HCT116 (cell line): ENCODE measurements at regions of chr12 and their contacts with region 1.

Region 1: GRCh38 chr12:40010899-40011774 is 94.7 kb downstream of the SLC2A13 start:
- DNase-seq: peak; percentile 41
- ATAC-seq: peak; percentile 83
- H3K4me3 ChIP-seq: no peak overlapping the region
- H3K27ac ChIP-seq: no peak overlapping the region
- H3K4me1 ChIP-seq: peaks cover 0 to 6% of the 10 kb centered on the region in 2 experiments; a peak in 1 of 4 replicates
- H3K27me3 ChIP-seq: no peaks in the 10 kb centered on the region
- CTCF ChIP-seq: peak; percentile 84 to 90 (median 88)
- POLR2A ChIP-seq: no peak
- RAD21 ChIP-seq: peak; percentile 57

Region 2: DNA sequence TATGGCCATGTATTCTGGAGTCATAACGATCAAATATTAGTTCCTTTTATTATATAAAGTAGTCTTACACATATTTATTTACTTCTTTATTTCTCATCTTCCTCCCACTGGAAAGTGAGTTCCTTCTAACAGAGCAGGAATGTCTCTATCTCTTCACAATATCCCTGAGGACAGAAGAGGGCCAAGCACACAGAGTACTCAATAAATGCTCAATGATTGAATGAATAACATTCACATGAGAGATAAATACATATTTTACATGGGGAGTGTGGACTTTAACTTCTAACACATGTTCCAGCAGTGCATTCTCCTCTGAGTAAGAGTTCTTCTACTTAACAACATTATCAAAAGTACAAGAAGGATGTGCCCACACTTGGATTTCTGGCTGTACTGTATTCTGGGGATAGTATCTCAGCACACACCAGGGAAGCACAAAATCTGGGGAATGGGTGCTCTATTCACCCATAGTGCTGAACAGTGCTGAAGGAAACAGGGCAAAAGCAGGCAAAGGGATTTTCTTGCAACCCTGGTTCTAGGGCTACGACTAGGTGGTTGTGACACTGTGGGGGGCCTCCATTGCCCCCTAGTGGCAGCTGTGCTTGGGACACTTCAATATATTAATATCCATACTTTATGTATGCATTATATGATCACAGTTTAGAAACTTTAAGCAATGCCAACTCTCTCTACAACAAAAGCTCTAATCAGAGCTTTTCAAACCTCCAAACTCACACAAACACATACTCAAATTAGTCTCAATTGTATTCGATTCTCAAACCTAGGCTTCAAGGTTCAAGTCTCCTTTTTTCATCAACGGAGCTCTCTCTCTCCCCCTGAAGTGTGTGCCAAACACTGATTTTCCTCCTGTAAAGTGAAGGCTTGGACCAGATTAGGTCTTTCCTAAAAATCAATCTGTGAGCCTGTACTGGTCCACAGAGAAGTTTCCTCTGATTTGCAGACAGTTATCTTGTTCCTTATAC is 20.7 kb before region 1 on chr12:
- CTCF ChIA-PET with region 1: interaction called, 18 read pairs
- POLR2A ChIA-PET with region 1: no interaction called
- RAD21 ChIA-PET with region 1: no interaction called
- intact Hi-C with region 1: no loop called
- DNase-seq: peak; percentile 22
- ATAC-seq: peak; percentile 86
- H3K4me3 ChIP-seq: no peak overlapping the region
- H3K27ac ChIP-seq: no peak overlapping the region
- H3K4me1 ChIP-seq: no peaks in the 10 kb centered on the region
- H3K27me3 ChIP-seq: no peaks in the 10 kb centered on the region
- CTCF ChIP-seq: peak; percentile 38 to 95 (median 82); a peak in 5 of 6 replicates
- POLR2A ChIP-seq: no peak
- RAD21 ChIP-seq: peak; percentile 66

Region 3: GRCh38 chr12:40107098-40107802 is 96.1 kb after region 1 on chr12:
- CTCF ChIA-PET with region 1: interaction called, 8 read pairs
- POLR2A ChIA-PET with region 1: no interaction called
- RAD21 ChIA-PET with region 1: interaction called in 1 of 2 experiments, 4 read pairs
- intact Hi-C with region 1: loop called (anchors 1 kb)
- DNase-seq: peak; percentile 60
- ATAC-seq: peak; percentile 44
- H3K4me3 ChIP-seq: peak overlapping the region; percentile 10 to 31; a peak in 3 of 4 replicates
- H3K27ac ChIP-seq: no peak overlapping the region
- H3K4me1 ChIP-seq: peaks cover 7 to 25% of the 10 kb centered on the region in 2 experiments; a peak in 3 of 4 replicates
- H3K27me3 ChIP-seq: no peaks in the 10 kb centered on the region
- CTCF ChIP-seq: peak; percentile 84 to 90 (median 89); a peak in 5 of 6 replicates
- POLR2A ChIP-seq: no peak
- RAD21 ChIP-seq: peak; percentile 74

Region 4: DNA sequence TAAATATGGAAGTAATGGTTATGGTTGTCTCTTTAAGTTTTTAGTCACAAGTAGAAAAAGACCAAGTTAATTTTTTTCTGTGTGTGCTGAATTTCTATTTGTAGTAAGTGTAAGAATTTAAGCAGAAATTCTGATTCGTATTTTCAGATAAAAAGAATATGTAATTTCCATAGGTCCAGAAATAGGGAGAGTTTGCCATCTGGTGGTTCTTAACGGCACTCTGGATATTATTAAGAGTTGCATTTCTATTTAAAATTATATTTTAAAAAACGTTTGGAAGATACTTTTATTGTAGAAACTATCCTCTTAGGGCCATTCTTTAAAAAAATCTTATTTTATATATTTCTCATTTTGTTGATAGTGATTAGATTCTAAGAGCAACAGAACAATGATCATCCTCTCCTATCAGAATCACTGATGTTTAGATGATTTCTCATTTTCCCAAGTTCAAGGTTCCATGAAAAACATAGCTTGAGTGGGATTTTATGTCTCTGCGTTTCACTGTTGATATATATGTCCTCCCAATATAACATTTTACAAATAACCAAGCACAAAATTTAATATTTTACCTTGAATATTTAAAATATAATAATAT is 301.9 kb after region 1 on chr12:
- CTCF ChIA-PET with region 1: interaction called, 22 read pairs
- POLR2A ChIA-PET with region 1: no interaction called
- RAD21 ChIA-PET with region 1: interaction called in 1 of 2 experiments, 3 read pairs
- intact Hi-C with region 1: loop called (anchors 2 kb)
- DNase-seq: no peak
- ATAC-seq: no peak
- H3K4me3 ChIP-seq: no peak overlapping the region
- H3K27ac ChIP-seq: no peak overlapping the region
- H3K4me1 ChIP-seq: no peaks in the 10 kb centered on the region
- H3K27me3 ChIP-seq: no peaks in the 10 kb centered on the region
- CTCF ChIP-seq: peak; percentile 34 to 64 (median 50); a peak in 5 of 6 replicates
- POLR2A ChIP-seq: no peak
- RAD21 ChIP-seq: peak; percentile 64